ENCODE measurements at regions of chr11 and their contacts with region 1.

Region 1: GRCh38 chr11:128290106-128290840 is 297.1 kb downstream of the ETS1 start:
- DNase-seq: peak; percentile 36 to 73 (median 62)
- ATAC-seq: peak; percentile 97
- H3K4me3 ChIP-seq: no peak overlapping the region
- H3K27ac ChIP-seq: peak overlapping the region; percentile 44 to 65
- H3K4me1 ChIP-seq: peaks cover 0 to 12% of the 10 kb centered on the region in 2 donors
- H3K27me3 ChIP-seq: no peaks in the 10 kb centered on the region
- CTCF ChIP-seq: peak; percentile 76 to 82

Region 2: GRCh38 chr11:128146926-128147605 is 143.2 kb before region 1 on chr11:
- intact Hi-C with region 1: no loop called
- DNase-seq: no peak
- ATAC-seq: no peak
- H3K4me3 ChIP-seq: no peak overlapping the region
- H3K27ac ChIP-seq: no peak overlapping the region
- H3K4me1 ChIP-seq: peaks cover 0 to 4% of the 10 kb centered on the region in 2 donors
- H3K27me3 ChIP-seq: no peaks in the 10 kb centered on the region
- CTCF ChIP-seq: no peak

Region 3: DNA sequence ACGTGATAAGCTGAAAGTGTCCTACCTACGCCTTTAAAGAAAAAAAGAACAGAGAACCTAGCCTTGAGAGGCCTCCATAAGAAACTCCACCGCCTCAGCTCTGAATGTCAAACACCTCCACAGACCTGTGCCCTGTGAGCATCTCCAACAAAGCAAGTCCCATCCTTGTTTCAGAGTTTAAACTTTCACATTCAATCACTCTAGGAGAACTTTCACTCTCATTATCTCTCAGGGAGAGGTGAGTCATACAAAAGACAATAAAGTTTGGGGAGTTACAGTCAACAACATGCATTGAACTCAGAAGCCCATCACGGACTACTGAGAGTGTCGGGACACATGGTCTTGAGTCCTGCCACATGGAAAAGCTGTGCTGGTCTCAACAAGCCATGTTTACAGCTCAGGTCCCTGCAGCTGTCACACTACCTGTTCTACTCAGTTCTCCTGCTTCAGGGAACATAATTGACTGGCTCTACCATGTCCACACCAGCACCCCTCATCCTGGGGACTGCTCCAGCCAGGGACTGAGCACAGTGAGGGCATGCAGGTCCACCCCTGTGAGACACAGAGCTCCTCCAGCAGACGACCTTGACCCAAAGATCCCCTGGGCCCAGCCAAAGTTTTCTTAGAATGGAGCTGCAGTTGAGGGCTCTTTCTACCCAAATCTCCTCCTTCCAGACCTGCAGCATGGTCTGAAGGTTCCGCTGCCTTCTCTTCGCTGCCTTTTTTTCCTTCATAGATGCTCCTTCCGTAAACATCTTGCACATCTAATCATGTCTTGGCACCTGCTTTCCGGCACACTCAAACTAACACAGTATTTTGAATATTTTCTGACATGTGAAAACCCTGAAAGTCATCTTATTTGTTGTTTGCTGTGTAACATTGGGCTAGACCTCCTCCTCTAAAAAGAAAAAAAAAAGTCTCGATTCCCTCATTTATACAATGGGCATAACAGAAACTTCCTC is 182.1 kb after region 1 on chr11:
- intact Hi-C with region 1: no loop called
- DNase-seq: no peak
- ATAC-seq: no peak
- H3K4me3 ChIP-seq: no peak overlapping the region
- H3K27ac ChIP-seq: peak overlapping the region; percentile 27 to 65
- H3K4me1 ChIP-seq: peaks cover 40 to 98% of the 10 kb centered on the region in 2 donors
- H3K27me3 ChIP-seq: no peaks in the 10 kb centered on the region
- CTCF ChIP-seq: no peak

Region 4: GRCh38 chr11:128624269-128625175 is 334.2 kb after region 1 on chr11:
- intact Hi-C with region 1: loop called in 1 of 2 experiments (anchors 10 kb)
- DNase-seq: peak in 2 of 4 donors; percentile 67 to 86
- ATAC-seq: peak; percentile 89
- H3K4me3 ChIP-seq: no peak overlapping the region
- H3K27ac ChIP-seq: peak overlapping the region in 1 of 2 donors; percentile 51
- H3K4me1 ChIP-seq: peaks cover 0 to 56% of the 10 kb centered on the region in 2 donors
- H3K27me3 ChIP-seq: no peaks in the 10 kb centered on the region
- CTCF ChIP-seq: no peak